Activated CD4-positive, alpha-beta T cell treated with anti-CD3 and anti-CD28 coated beads for 36 hours (primary cell): ENCODE measurements at regions of chr14 and their contacts with region 1.

Region 1: DNA sequence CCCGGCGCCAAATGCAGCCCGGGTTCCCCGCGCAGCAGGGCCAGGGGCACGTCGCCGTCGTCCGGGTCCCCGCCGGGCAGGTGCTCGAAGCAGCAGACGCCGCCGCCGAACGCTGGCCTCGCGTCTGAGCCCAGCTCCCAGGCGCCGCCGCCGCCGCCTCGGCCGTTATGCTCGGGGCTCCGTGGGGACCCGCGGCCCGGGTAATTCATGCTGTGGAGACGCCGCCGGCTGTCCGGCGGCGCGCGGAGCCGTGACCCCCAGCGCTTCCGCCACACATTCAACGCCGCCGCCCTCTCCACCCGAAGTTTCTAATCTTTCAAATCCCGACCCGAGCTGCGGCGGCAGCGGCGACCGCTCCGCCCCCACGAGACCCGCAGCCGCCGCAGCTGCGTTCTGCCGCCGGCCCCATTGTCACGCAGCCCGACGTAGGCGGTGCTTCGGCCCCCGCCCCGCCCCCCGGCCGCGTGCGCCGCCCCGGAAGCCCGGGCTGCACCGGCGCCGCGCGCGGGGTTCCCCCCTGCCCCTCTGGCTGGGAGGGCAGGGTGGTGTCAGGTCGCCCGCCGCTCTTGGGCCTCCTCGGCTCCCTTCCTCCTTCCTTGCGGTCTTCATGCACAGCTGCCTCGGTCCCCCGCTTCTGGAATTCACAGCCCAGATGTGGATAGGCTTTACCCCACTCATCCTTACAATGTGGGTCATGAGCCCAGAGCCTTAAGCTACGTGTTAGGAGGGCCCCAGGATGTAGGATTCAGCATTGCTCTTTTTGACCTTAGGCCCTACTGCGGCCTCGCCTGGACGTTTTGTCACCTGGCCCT is at the start of gene DDHD1:
- DNase-seq: peak; percentile 90
- ATAC-seq: peak; percentile 79
- H3K4me3 Mint-ChIP-seq: peak within 1 kb of the TSS; percentile 99
- H3K27ac Mint-ChIP-seq: peak within 1 kb of the TSS; percentile 99
- H3K4me1 Mint-ChIP-seq: peaks cover 34% of the 10 kb centered on the region
- H3K27me3 Mint-ChIP-seq: no peaks in the 10 kb centered on the region
- total RNA-seq, gene DDHD1: 34.7 to 36.2 TPM

Region 2: DNA sequence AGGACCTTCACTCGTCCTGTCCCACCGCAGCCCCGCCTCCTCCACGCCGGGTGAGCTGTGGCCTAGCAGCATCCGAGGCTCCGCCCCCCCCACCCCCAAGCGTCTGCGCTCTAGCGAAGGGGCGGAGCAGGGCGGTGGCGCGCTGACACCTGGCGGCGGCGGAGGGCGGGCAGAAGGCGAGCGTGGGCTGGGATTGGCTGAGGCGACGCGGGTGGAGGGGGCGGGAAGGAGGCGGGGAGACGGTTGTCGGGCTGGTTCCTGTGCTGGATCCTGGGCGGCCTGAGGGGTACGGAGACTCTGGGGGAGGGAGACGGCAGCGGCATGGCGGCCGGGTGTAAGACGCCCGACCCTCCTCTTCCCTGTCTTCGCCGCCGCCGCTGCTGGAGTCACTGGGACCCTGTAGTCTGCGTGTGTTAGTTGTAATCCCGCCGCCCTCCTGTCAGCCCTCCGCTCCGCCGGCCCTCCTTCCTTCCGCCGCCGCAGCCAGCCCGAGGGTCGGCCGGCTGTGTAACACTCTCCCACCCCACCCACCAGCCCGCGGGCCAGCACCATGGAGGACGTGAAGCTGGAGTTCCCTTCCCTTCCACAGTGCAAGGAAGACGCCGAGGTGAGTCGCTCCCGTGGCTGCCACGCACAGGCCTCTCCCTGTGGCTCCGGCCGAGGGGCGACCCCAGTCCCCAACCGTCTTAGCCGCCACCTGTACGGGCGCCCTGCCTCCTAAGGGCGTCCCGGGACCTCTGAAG is 423.0 kb before region 1 on chr14 and contains the start of gene STYX:
- CTCF ChIA-PET with region 1: no interaction called
- POLR2A ChIA-PET with region 1: no interaction called
- intact Hi-C with region 1: loop called in 1 of 2 experiments (anchors 1 kb)
- DNase-seq: peak; percentile 99
- ATAC-seq: peak; percentile 97
- H3K4me3 Mint-ChIP-seq: peak within 1 kb of the TSS; percentile 93
- H3K27ac Mint-ChIP-seq: peak within 1 kb of the TSS; percentile 90
- H3K4me1 Mint-ChIP-seq: peaks cover 33% of the 10 kb centered on the region
- H3K27me3 Mint-ChIP-seq: no peaks in the 10 kb centered on the region
- total RNA-seq, gene STYX: 13.1 to 13.3 TPM

Region 3: GRCh38 chr14:52755607-52756253 is 397.4 kb before region 1 on chr14:
- CTCF ChIA-PET with region 1: no interaction called
- POLR2A ChIA-PET with region 1: no interaction called
- intact Hi-C with region 1: no loop called
- DNase-seq: no peak
- ATAC-seq: no peak
- H3K4me3 Mint-ChIP-seq: no peak overlapping the region
- H3K27ac Mint-ChIP-seq: no peak overlapping the region
- H3K4me1 Mint-ChIP-seq: peaks cover 2% of the 10 kb centered on the region
- H3K27me3 Mint-ChIP-seq: no peaks in the 10 kb centered on the region

Region 4: GRCh38 chr14:53109105-53110041 is 43.7 kb before region 1 on chr14:
- CTCF ChIA-PET with region 1: interaction called, 42 read pairs
- POLR2A ChIA-PET with region 1: interaction called, 24 read pairs
- intact Hi-C with region 1: loop called (anchors 1 kb)
- DNase-seq: peak; percentile 79
- ATAC-seq: peak; percentile 88
- H3K4me3 Mint-ChIP-seq: no peak overlapping the region
- H3K27ac Mint-ChIP-seq: no peak overlapping the region
- H3K4me1 Mint-ChIP-seq: peaks cover 25% of the 10 kb centered on the region
- H3K27me3 Mint-ChIP-seq: no peaks in the 10 kb centered on the region

Region 5: DNA sequence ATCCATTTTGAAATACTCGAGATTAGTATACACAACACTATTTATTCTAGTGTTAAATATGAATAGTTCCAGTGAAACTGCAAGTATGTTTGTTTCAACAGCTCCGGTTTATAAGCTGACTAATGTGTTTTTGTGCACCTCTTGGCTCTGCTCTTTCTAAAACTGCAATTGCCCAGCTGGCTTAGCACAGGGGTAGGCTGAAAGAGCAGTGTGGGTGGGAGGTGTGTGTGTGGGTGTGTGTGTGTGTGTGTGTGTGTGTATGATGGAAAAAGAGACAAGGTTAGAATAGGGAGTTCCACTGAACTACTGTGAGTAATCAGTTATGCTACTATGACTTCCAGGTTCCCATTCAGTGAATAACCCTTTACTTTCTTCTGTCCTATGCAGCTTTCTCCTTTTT is 37.8 kb after region 1 on chr14:
- CTCF ChIA-PET with region 1: interaction called, 5 read pairs
- POLR2A ChIA-PET with region 1: interaction called, 21 read pairs
- intact Hi-C with region 1: loop called (anchors 1 kb)
- DNase-seq: peak; percentile 83
- ATAC-seq: peak; percentile 96
- H3K4me3 Mint-ChIP-seq: peak overlapping the region; percentile 30
- H3K27ac Mint-ChIP-seq: peak overlapping the region; percentile 74
- H3K4me1 Mint-ChIP-seq: peaks cover 28% of the 10 kb centered on the region
- H3K27me3 Mint-ChIP-seq: peaks cover 2% of the 10 kb centered on the region

Region 6: GRCh38 chr14:54440873-54441868 is 1288.1 kb after region 1 on chr14 and contains the start of gene CNIH1:
- CTCF ChIA-PET with region 1: no interaction called
- POLR2A ChIA-PET with region 1: no interaction called
- intact Hi-C with region 1: loop called in 1 of 2 experiments (anchors 2 kb)
- DNase-seq: peak; percentile 96
- ATAC-seq: peak; percentile 92
- H3K4me3 Mint-ChIP-seq: peak within 1 kb of the TSS; percentile 80
- H3K27ac Mint-ChIP-seq: peak within 1 kb of the TSS; percentile 99
- H3K4me1 Mint-ChIP-seq: peaks cover 47% of the 10 kb centered on the region
- H3K27me3 Mint-ChIP-seq: no peaks in the 10 kb centered on the region
- total RNA-seq, gene CNIH1: 86.6 to 109 TPM